Common myeloid progenitor, CD34-positive (primary cell): ENCODE measurements at regions of chr9 and their contacts with region 1.

Region 1: DNA sequence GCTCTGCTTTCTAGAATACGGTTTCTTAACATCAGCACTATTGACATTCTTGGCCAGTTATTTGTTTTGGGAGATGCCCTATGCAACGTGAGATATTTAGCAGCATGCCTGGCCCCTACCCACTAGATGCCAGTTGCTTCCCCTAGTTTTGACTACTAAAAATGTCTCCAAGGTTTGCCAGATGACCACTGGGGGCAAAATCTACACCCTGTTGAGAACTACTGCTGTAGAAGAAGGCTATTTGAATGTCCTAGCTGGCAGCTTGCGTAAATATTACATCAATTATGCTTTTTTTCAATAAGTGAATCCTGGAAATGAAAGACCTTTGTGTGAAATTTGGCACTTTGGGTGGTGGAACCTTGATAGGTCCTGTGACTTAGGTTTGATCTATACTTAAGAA is 5.0 kb downstream of the NCBP1 start:
- DNase-seq: peak in 2 of 3 donors; percentile 33 to 35
- H3K4me3 ChIP-seq: no peak overlapping the region
- H3K27ac ChIP-seq: no peak overlapping the region
- H3K4me1 ChIP-seq: peaks cover 11 to 28% (median 25%) of the 10 kb centered on the region in 4 experiments
- H3K27me3 ChIP-seq: no peaks in the 10 kb centered on the region

Region 2: DNA sequence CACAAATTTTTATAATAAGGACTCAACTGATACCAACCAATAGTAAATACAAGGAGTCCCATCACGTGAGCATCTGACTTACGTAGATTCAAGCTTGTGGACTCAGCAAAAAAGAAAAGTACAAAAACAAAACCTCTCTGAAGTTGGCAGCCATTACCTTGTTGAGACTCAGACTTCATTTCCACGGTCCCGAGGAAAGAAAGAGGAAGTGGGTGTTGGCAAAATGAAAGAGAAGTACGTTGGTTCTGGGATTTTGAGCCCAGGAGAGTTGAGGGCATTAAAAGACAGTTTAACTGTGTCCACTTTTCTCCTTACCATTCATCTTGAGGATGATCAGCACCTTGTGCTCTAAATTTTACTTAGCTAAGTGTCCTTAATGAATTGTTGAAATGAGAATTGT is 21.7 kb after region 1 on chr9:
- CTCF ChIA-PET with region 1: interaction called, 12 read pairs
- POLR2A ChIA-PET with region 1: no interaction called
- DNase-seq: peak; percentile 25 to 46 (median 42)
- H3K4me3 ChIP-seq: no peak overlapping the region
- H3K27ac ChIP-seq: no peak overlapping the region
- H3K4me1 ChIP-seq: peaks cover 0 to 5% (median 1%) of the 10 kb centered on the region in 4 experiments
- H3K27me3 ChIP-seq: no peaks in the 10 kb centered on the region